Activated CD4-positive, alpha-beta T cell treated with anti-CD3 and anti-CD28 coated beads for 36 hours (primary cell): ENCODE measurements at regions of chr1 and their contacts with region 1.

Region 1: GRCh38 chr1:172837816-172838680 is 179.1 kb downstream of the FASLG start:
- DNase-seq: peak; percentile 29
- ATAC-seq: peak; percentile 99
- H3K4me3 Mint-ChIP-seq: no peak overlapping the region
- H3K27ac Mint-ChIP-seq: no peak overlapping the region
- H3K4me1 Mint-ChIP-seq: peaks cover 25% of the 10 kb centered on the region
- H3K27me3 Mint-ChIP-seq: peaks cover 48% of the 10 kb centered on the region

Region 2: GRCh38 chr1:172338295-172338735 is 499.7 kb before region 1 on chr1:
- CTCF ChIA-PET with region 1: no interaction called
- POLR2A ChIA-PET with region 1: no interaction called
- intact Hi-C with region 1: loop called in 1 of 2 experiments (anchors 1 kb)
- DNase-seq: peak; percentile 82
- ATAC-seq: peak; percentile 88
- H3K4me3 Mint-ChIP-seq: no peak overlapping the region
- H3K27ac Mint-ChIP-seq: peak overlapping the region; percentile 30
- H3K4me1 Mint-ChIP-seq: peaks cover 48% of the 10 kb centered on the region
- H3K27me3 Mint-ChIP-seq: peaks cover 2% of the 10 kb centered on the region

Region 3: DNA sequence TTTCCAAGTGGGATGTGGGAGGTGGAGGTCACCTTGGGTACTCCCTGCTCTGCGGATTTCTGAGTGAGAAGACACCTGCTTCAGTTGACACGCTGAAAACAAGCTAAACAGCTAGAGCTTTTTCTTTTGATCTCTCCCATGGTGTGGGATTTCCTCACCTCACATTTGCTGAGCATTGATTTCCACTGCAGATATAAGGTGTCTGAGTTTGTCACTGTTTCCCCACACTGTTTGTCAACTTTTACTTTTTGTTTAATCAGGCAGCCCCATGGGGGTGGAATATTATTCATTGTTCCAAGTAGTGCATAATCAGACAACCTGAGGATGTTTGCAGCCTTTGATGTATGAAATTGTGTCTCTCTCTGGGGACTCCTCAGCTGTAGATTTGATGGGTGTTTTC is 129.6 kb before region 1 on chr1:
- CTCF ChIA-PET with region 1: no interaction called
- POLR2A ChIA-PET with region 1: no interaction called
- intact Hi-C with region 1: loop called in 1 of 2 experiments (anchors 1 kb)
- DNase-seq: peak; percentile 56
- ATAC-seq: peak; percentile 86
- H3K4me3 Mint-ChIP-seq: peak overlapping the region; percentile 37
- H3K27ac Mint-ChIP-seq: peak overlapping the region; percentile 47
- H3K4me1 Mint-ChIP-seq: peaks cover 13% of the 10 kb centered on the region
- H3K27me3 Mint-ChIP-seq: peaks cover 16% of the 10 kb centered on the region

Region 4: DNA sequence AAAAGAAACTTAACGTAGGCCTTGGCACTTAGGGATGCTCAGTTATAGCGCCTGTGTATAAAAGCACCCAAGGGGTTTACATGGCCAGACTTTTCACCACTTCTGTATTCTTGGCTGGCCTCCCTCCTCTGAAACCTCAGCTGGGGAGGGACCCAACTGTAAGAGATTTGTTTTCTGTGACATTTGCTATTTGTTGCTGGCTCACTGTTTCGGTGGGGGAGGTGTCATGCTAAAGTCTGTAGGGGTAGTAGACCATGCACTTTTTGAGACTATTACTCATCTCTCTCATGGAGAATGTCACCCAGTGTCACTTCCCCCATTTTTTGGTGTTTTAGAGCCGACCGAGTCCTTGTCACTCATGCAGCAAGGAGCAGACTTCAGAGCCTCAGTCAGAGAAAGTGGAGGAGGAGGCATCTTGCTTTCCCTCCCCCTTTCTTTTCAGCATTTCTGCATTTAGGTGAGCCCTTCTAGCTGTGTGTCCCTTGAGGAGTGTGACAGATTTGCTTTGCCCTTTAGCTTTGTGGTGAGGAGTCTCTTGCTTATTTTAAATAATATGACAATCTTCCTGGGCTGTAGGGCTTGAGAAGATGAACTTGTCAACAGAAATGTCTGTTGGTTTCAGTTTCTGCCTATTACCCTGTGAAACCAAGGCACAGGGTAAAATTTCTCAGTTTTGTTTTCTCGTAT is 19.1 kb before region 1 on chr1:
- CTCF ChIA-PET with region 1: interaction called, 5 read pairs
- POLR2A ChIA-PET with region 1: no interaction called
- intact Hi-C with region 1: loop called (anchors 1 kb)
- DNase-seq: peak; percentile 70
- ATAC-seq: peak; percentile 96
- H3K4me3 Mint-ChIP-seq: peak overlapping the region; percentile 3
- H3K27ac Mint-ChIP-seq: peak overlapping the region; percentile 38
- H3K4me1 Mint-ChIP-seq: peaks cover 33% of the 10 kb centered on the region
- H3K27me3 Mint-ChIP-seq: peaks cover 15% of the 10 kb centered on the region

Region 5: DNA sequence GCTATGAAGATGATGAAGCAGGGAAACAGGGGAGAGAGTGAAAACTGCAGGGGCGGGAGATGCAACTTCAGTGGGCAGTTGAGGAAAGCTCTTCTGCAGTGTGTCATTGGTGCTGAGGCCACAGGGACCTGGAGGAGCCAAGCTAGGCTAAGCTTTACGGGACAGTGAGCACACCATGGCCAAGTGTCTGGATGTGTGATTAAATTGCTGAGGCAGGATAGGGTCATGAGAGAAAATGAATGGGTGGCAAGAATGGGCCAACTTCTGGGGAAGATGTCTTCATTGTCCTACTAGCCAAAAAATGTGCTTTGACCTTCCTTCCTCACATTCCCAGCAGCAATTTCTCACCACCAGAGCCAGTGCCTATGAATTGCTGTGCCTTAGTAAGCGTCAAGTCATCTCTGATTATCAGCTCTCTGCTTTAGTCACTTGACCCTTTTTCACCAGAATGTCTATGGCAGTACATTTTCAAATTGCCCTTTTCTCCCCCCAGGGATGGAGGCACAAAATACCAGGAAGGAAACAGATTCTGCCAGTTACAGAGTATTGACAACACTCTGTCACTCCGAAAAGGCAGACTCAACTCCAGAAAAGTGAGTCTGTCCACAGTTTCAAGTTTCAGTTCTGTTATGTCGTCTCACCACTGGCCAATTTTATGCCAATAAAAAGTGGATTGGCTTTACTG is 45.2 kb after region 1 on chr1:
- CTCF ChIA-PET with region 1: interaction called, 4 read pairs
- POLR2A ChIA-PET with region 1: no interaction called
- intact Hi-C with region 1: loop called in 1 of 2 experiments (anchors 1 kb)
- DNase-seq: peak; percentile 25
- ATAC-seq: peak; percentile 83
- H3K4me3 Mint-ChIP-seq: no peak overlapping the region
- H3K27ac Mint-ChIP-seq: peak overlapping the region; percentile 38
- H3K4me1 Mint-ChIP-seq: peaks cover 14% of the 10 kb centered on the region
- H3K27me3 Mint-ChIP-seq: peaks cover 45% of the 10 kb centered on the region

Region 6: GRCh38 chr1:172969611-172970010 is 131.6 kb after region 1 on chr1:
- CTCF ChIA-PET with region 1: no interaction called
- POLR2A ChIA-PET with region 1: no interaction called
- intact Hi-C with region 1: loop called (anchors 1 to 2 kb)
- DNase-seq: no peak
- ATAC-seq: no peak
- H3K4me3 Mint-ChIP-seq: no peak overlapping the region
- H3K27ac Mint-ChIP-seq: no peak overlapping the region
- H3K4me1 Mint-ChIP-seq: peaks cover 17% of the 10 kb centered on the region
- H3K27me3 Mint-ChIP-seq: no peaks in the 10 kb centered on the region

Region 7: GRCh38 chr1:173202430-173203145 is 364.5 kb after region 1 on chr1:
- CTCF ChIA-PET with region 1: interaction called, 3 read pairs
- POLR2A ChIA-PET with region 1: no interaction called
- intact Hi-C with region 1: loop called in 1 of 2 experiments (anchors 5 kb)
- DNase-seq: peak; percentile 14
- ATAC-seq: no peak
- H3K4me3 Mint-ChIP-seq: no peak overlapping the region
- H3K27ac Mint-ChIP-seq: no peak overlapping the region
- H3K4me1 Mint-ChIP-seq: peaks cover 33% of the 10 kb centered on the region
- H3K27me3 Mint-ChIP-seq: peaks cover 13% of the 10 kb centered on the region